Dorsolateral prefrontal cortex (tissue), 120 donors: ENCODE measurements at regions of chr3 and their contacts with region 1.

Region 1: GRCh38 chr3:112136959-112137693 is 4.1 kb upstream of the GCSAM start:
- DNase-seq: peak in 3 of 10 donors; percentile 32 to 68 (median 52)
- H3K4me3 ChIP-seq: no peak overlapping the region
- H3K27ac ChIP-seq: no peak overlapping the region
- H3K27me3 ChIP-seq: no peaks in the 10 kb centered on the region
- CTCF ChIP-seq: peak; percentile 38 to 82 (median 66)

Region 2: GRCh38 chr3:111989061-111989678 is 148.0 kb before region 1 on chr3:
- intact Hi-C with region 1: no loop called
- DNase-seq: no peak
- H3K4me3 ChIP-seq: no peak overlapping the region
- H3K27ac ChIP-seq: no peak overlapping the region
- H3K27me3 ChIP-seq: no peaks in the 10 kb centered on the region
- CTCF ChIP-seq: peak in 55 of 56 donors; percentile 32 to 86 (median 70)

Region 3: GRCh38 chr3:112293368-112294321 is 156.5 kb after region 1 on chr3 and contains the start of gene SLC9C1:
- intact Hi-C with region 1: loop called in 1 of 2 experiments (anchors 10 kb)
- DNase-seq: peak in 2 of 10 donors; percentile 14 to 41
- H3K4me3 ChIP-seq: peak within 1 kb of the TSS; percentile 15 to 71 (median 51)
- H3K27ac ChIP-seq: peak within 1 kb of the TSS in 56 of 59 donors; percentile 4 to 92 (median 68)
- H3K27me3 ChIP-seq: no peaks in the 10 kb centered on the region
- CTCF ChIP-seq: peak; percentile 40 to 88 (median 72)
- total RNA-seq, gene SLC9C1: 0.12 to 1.4 (median 0.27) TPM in 12 of 120 experiments, not detected in the others

Region 4: DNA sequence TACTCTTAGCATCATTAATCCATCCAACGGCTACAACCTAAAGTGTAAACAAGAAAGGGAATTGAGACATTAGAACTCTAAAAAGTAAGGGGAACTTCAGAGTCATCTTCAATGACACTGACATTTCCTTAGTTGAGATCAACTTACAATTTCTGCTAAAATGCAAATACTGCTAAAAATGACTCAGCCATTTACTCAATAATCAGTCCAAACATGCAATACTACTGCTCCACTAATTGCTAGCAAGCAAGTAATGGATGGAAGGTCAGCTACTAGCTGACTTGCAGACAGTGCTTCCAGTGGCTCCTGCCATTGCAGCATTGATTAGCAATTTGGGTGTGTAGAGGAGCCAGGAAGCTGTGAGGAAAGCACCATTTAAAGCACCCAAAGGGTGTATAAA is 681.2 kb after region 1 on chr3:
- intact Hi-C with region 1: no loop called
- DNase-seq: no peak
- H3K4me3 ChIP-seq: no peak overlapping the region
- H3K27ac ChIP-seq: no peak overlapping the region
- H3K27me3 ChIP-seq: no peaks in the 10 kb centered on the region
- CTCF ChIP-seq: no peak